Right lobe of liver (tissue), 6 donors: ENCODE measurements at regions of chr6 and their contacts with region 1.

Region 1: DNA sequence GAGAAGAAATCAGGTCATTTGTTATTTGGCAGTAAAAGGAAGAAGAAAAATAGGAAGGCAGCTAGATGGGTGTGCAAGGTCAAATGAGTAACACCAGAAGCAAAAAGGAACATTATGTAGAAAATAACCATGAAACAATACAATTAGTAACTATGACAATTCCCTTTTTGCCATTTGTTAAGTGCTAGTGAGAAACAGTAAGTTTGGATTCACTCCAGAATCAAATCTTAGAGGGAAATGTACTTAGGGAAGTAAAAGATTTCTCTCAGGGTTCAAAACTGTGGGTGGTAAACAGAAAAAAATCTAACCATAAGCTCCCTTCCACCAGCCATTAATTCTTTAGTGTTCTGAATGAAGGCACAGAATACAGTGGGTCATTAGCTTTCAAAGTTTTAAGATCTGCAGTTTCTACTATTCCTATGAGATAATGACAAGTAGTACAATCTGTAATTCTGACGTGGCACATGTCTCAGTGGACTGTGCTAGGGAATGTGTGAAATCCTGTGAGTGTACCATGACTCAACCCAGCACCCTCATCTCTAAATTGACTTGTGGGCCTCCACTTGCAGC is 17.1 kb downstream of the REPS1 start:
- DNase-seq: no peak
- ATAC-seq: peak; percentile 53 to 79 (median 66)
- H3K4me3 ChIP-seq: no peak overlapping the region
- H3K27ac ChIP-seq: peak overlapping the region in 1 of 3 donors; percentile 16
- H3K4me1 ChIP-seq: peaks cover 0 to 25% (median 7%) of the 10 kb centered on the region in 4 donors
- H3K27me3 ChIP-seq: no peaks in the 10 kb centered on the region
- CTCF ChIP-seq: no peak
- POLR2A ChIP-seq: no peak

Region 2: DNA sequence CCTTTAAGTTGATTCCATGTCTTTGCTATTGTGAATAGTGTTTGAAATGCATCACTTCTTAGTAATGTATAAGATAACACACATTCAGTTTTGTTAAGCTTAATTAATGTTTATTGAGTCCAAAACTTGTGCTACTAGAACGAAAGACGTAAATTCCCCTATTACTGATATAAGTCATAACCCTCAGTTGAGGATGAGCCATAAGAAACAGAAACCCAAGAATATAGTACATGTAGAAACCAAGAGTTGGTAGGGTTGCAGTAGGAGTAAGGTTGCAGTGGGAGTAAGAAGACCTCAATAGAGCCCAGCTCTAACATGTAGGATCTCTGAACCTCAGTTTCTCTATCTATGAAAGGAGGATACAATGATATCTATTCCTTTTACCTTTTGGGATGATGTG is 384.2 kb after region 1 on chr6:
- intact Hi-C with region 1: loop called in 1 of 2 experiments (anchors 10 kb)
- DNase-seq: no peak
- ATAC-seq: no peak
- H3K4me3 ChIP-seq: no peak overlapping the region
- H3K27ac ChIP-seq: no peak overlapping the region
- H3K4me1 ChIP-seq: no peaks in the 10 kb centered on the region
- H3K27me3 ChIP-seq: no peaks in the 10 kb centered on the region
- CTCF ChIP-seq: no peak
- POLR2A ChIP-seq: no peak

Region 3: GRCh38 chr6:139679516-139680179 is 708.7 kb after region 1 on chr6:
- intact Hi-C with region 1: no loop called
- DNase-seq: no peak
- ATAC-seq: peak; percentile 45 to 86 (median 68)
- H3K4me3 ChIP-seq: no peak overlapping the region
- H3K27ac ChIP-seq: no peak overlapping the region
- H3K4me1 ChIP-seq: peaks cover 0 to 9% (median 0%) of the 10 kb centered on the region in 4 donors
- H3K27me3 ChIP-seq: no peaks in the 10 kb centered on the region
- CTCF ChIP-seq: no peak
- POLR2A ChIP-seq: no peak